A549 (cell line): ENCODE measurements at regions of chr17 and their contacts with region 1.

Region 1: DNA sequence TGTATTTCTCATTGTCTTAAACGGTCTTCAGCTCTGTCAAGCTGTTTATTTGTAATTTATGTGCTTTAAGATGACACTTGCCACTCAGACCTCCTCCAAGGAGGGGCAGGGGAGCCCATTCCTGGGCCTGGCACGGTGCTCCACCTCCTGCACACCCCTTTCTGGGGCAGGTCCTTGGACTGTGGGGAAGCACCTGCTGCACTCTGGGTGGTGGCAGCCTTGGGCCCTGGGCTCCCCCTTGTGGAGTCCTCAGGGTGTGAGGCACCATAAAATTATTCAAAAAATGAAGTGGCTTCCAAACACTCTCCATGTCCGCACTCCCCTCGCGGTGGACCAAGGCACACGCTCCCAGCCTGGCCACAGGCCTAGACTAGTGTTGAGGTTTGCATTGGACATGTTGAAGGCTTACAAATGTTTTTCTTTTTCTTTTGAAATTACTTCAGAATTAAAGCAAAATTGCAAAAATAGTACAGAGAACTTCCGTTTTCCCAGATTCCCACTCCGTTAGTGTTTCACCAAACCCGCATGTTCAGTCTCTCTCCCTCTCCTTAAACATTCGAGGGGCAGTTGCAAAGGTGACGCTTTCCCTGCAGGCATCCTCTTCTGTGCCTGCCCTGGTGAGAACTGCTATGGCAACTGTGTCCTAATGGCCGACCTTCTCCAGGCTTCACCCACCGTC is 32.4 kb downstream of the FOXK2 start:
- DNase-seq: peak; percentile 81 to 96
- ATAC-seq: peak; percentile 96 to 97
- H3K4me3 ChIP-seq: no peak overlapping the region
- H3K27ac ChIP-seq: no peak overlapping the region
- H3K4me1 ChIP-seq: peaks cover 27% of the 10 kb centered on the region
- CTCF ChIP-seq: peak; percentile 74
- EP300 ChIP-seq: no peak
- POLR2A ChIP-seq: no peak
- RAD21 ChIP-seq: peak; percentile 73 to 77

Region 2: GRCh38 chr17:82351716-82352488 is 200.0 kb before region 1 on chr17:
- CTCF ChIA-PET with region 1: interaction called, 12 read pairs
- POLR2A ChIA-PET with region 1: no interaction called
- DNase-seq: peak; percentile 88 to 93
- ATAC-seq: peak; percentile 75 to 92
- H3K4me3 ChIP-seq: no peak overlapping the region
- H3K27ac ChIP-seq: no peak overlapping the region
- H3K4me1 ChIP-seq: peaks cover 19% of the 10 kb centered on the region; the same call in 2 of the 3 replicates
- CTCF ChIP-seq: peak; percentile 98
- EP300 ChIP-seq: no peak
- POLR2A ChIP-seq: no peak
- RAD21 ChIP-seq: peak; percentile 97

Region 3: GRCh38 chr17:82489117-82489516 is 62.8 kb before region 1 on chr17:
- CTCF ChIA-PET with region 1: interaction called, 26 read pairs
- POLR2A ChIA-PET with region 1: no interaction called
- DNase-seq: no peak
- ATAC-seq: no peak
- H3K4me3 ChIP-seq: no peak overlapping the region
- H3K27ac ChIP-seq: no peak overlapping the region
- H3K4me1 ChIP-seq: peaks cover 22% of the 10 kb centered on the region
- CTCF ChIP-seq: no peak
- EP300 ChIP-seq: no peak
- POLR2A ChIP-seq: no peak
- RAD21 ChIP-seq: no peak

Region 4: GRCh38 chr17:82518826-82519810 is 32.8 kb before region 1 on chr17 and contains the start of gene FOXK2:
- CTCF ChIA-PET with region 1: interaction called, 14 read pairs
- POLR2A ChIA-PET with region 1: interaction called, 3 read pairs
- DNase-seq: peak; percentile 97 to 99
- ATAC-seq: peak; percentile 98 to 99
- H3K4me3 ChIP-seq: peak within 1 kb of the TSS; percentile 93
- H3K27ac ChIP-seq: peak within 1 kb of the TSS; percentile 90 to 96
- H3K4me1 ChIP-seq: peaks cover 12% of the 10 kb centered on the region
- CTCF ChIP-seq: no peak
- EP300 ChIP-seq: no peak
- POLR2A ChIP-seq: peak; percentile 39
- RAD21 ChIP-seq: no peak
- polyA plus RNA-seq, gene FOXK2: 34.8 and 35.9 TPM in 2 replicates

Region 5: DNA sequence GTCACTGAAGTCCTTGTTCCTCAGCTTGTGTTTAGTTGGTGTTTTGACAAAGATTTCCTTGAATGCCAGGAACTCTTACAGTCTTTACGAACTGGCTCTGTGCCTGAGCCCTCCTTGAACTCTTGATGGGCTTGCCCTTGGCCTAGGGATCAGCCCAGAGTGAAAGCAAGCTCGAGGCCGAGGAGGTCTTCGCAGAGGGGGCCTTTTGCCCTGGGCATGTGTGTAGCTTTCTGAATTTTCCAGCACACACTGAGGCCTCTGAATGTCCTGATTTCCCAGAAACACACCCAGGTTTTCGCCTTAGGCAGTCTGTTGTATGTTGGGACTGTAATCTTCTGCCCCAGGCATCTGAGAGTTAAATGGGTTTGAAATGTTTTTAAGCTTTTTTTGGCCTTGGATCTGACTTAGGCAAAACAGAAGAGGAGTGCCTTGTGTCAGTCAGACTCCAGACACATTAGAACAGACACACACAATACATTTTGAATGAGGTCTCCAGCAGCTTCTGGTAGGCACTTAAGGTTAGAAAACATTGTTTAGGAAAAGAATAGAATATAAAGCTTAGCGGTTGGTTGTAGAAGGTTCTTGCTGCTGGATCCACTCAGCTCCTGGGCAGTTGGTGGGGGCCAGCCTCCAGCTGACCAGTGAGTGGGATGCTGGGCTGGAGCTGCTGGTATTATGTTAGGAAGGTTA is 15.3 kb before region 1 on chr17:
- CTCF ChIA-PET with region 1: interaction called, 33 read pairs
- POLR2A ChIA-PET with region 1: no interaction called
- DNase-seq: no peak
- ATAC-seq: peak; percentile 21 to 48; a peak in 3 of 6 replicates
- H3K4me3 ChIP-seq: no peak overlapping the region
- H3K27ac ChIP-seq: peak overlapping the region; percentile 0 to 61; a peak in 4 of 6 replicates
- H3K4me1 ChIP-seq: peaks cover 41% of the 10 kb centered on the region
- CTCF ChIP-seq: no peak
- EP300 ChIP-seq: no peak
- POLR2A ChIP-seq: no peak
- RAD21 ChIP-seq: no peak